ENCODE measurements at regions of chrX and their contacts with region 1.

Region 1: DNA sequence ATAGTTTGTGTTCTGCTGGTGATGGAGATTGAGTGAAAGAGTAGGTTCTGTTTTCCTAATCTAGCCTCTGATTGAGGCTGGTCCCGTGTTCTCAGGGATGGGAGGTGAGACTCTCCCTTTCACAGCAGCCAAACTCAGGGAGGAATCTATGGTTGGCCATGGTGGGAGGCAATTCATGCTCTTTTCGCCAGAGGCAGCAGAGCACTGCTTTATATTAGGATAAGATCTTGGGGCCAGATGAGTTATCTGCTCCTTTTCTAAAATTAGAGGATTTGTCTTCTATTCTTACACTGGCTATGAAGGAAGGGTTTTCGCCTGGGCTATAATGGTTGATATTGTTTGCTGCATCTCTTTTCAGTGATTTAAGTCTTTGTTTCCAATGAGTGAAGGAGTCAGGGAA is 63.9 kb upstream of the NLGN4X start:
- DNase-seq: no peak
- H3K4me3 ChIP-seq: no peak overlapping the region
- H3K27ac ChIP-seq: no peak overlapping the region
- H3K27me3 ChIP-seq: peaks cover 0 to 15% (median 0%) of the 10 kb centered on the region in 45 donors
- CTCF ChIP-seq: no peak

Region 2: GRCh38 chrX:6311540-6311939 is 18.9 kb after region 1 on chrX:
- intact Hi-C with region 1: loop called in 1 of 2 experiments (anchors 1 kb)
- DNase-seq: no peak
- H3K4me3 ChIP-seq: no peak overlapping the region
- H3K27ac ChIP-seq: no peak overlapping the region
- H3K27me3 ChIP-seq: peaks cover 0 to 23% (median 0%) of the 10 kb centered on the region in 45 donors
- CTCF ChIP-seq: no peak